ENCODE measurements at regions of chr1 and their contacts with region 1.

Region 1: DNA sequence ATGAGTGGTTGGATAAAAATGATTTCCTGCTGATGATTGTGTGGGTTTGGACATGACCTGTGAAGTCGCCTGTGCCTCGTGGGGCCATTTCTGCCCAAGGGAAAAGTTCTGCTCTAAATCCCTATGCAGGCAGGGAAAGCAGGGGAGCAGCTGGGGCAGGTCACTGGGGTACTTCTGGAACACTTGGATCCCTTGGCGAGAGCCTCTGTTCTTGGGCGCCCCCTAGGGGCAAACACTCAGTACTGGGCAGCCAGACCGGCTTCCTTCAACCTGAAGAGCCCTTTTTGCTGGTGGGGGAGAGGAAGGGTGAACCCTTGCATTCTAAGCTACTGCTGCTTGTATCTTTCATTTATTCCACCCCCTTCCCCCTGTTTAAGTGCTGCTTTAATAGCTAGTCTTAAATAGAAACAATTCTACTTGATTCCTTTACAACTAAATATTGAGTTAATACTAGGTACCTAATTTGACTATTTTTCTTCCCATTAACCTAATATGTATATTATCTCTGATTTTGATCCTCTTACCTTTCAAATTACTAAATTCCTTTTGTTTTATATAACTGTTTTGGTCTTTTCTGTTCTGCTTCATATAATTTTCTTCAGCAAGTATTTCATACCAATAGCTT is 5.1 kb upstream of the CLEC20A start:
- DNase-seq: peak; percentile 85
- H3K4me3 Mint-ChIP-seq: no peak overlapping the region
- H3K27ac Mint-ChIP-seq: no peak overlapping the region
- H3K4me1 Mint-ChIP-seq: no peaks in the 10 kb centered on the region
- H3K27me3 Mint-ChIP-seq: no peaks in the 10 kb centered on the region
- CTCF ChIP-seq: peak; percentile 98

Region 2: GRCh38 chr1:177959811-177960515 is 541.9 kb before region 1 on chr1:
- CTCF ChIA-PET with region 1: interaction called, 5 read pairs
- POLR2A ChIA-PET with region 1: no interaction called
- intact Hi-C with region 1: loop called (anchors 1 kb)
- DNase-seq: peak; percentile 50
- H3K4me3 Mint-ChIP-seq: no peak overlapping the region
- H3K27ac Mint-ChIP-seq: no peak overlapping the region
- H3K4me1 Mint-ChIP-seq: peaks cover 6% of the 10 kb centered on the region
- H3K27me3 Mint-ChIP-seq: no peaks in the 10 kb centered on the region
- CTCF ChIP-seq: peak; percentile 74

Region 3: GRCh38 chr1:178294654-178295053 is 207.2 kb before region 1 on chr1:
- CTCF ChIA-PET with region 1: interaction called, 224 read pairs
- POLR2A ChIA-PET with region 1: interaction called, 5 read pairs
- intact Hi-C with region 1: no loop called
- DNase-seq: no peak
- H3K4me3 Mint-ChIP-seq: no peak overlapping the region
- H3K27ac Mint-ChIP-seq: no peak overlapping the region
- H3K4me1 Mint-ChIP-seq: peaks cover 7% of the 10 kb centered on the region
- H3K27me3 Mint-ChIP-seq: no peaks in the 10 kb centered on the region
- CTCF ChIP-seq: no peak

Region 4: GRCh38 chr1:178344513-178345082 is 157.2 kb before region 1 on chr1:
- CTCF ChIA-PET with region 1: interaction called, 88 read pairs
- POLR2A ChIA-PET with region 1: interaction called, 3 read pairs
- intact Hi-C with region 1: no loop called
- DNase-seq: peak; percentile 94
- H3K4me3 Mint-ChIP-seq: peak overlapping the region; percentile 46
- H3K27ac Mint-ChIP-seq: peak overlapping the region; percentile 90
- H3K4me1 Mint-ChIP-seq: peaks cover 42% of the 10 kb centered on the region
- H3K27me3 Mint-ChIP-seq: no peaks in the 10 kb centered on the region
- CTCF ChIP-seq: peak; percentile 75

Region 5: DNA sequence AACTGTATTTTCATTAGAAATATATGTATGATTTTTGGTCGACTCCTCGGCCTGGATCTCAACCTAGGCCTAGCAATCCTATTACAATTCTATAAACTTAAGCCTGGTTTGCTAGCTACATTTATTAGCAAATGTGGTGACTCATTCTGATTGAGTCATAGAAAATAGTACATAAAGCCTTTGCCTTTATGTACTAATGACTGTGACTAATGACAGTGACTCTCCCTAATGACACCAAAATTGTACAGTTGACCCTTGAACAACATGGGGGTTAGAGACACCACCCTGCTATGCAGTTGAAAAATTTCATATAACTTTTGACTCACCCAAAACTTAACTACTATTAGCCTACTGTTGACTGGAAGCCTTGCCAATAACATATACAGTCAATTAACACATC is 84.0 kb before region 1 on chr1:
- CTCF ChIA-PET with region 1: interaction called, 16 read pairs
- POLR2A ChIA-PET with region 1: no interaction called
- intact Hi-C with region 1: no loop called
- DNase-seq: peak; percentile 81
- H3K4me3 Mint-ChIP-seq: no peak overlapping the region
- H3K27ac Mint-ChIP-seq: peak overlapping the region; percentile 17
- H3K4me1 Mint-ChIP-seq: peaks cover 9% of the 10 kb centered on the region
- H3K27me3 Mint-ChIP-seq: no peaks in the 10 kb centered on the region
- CTCF ChIP-seq: no peak

Region 6: GRCh38 chr1:178477373-178477772 is 24.4 kb before region 1 on chr1:
- CTCF ChIA-PET with region 1: interaction called, 82 read pairs
- POLR2A ChIA-PET with region 1: no interaction called
- intact Hi-C with region 1: no loop called
- DNase-seq: no peak
- H3K4me3 Mint-ChIP-seq: no peak overlapping the region
- H3K27ac Mint-ChIP-seq: no peak overlapping the region
- H3K4me1 Mint-ChIP-seq: peaks cover 1% of the 10 kb centered on the region
- H3K27me3 Mint-ChIP-seq: no peaks in the 10 kb centered on the region
- CTCF ChIP-seq: no peak

Measured in MCF 10A (cell line).